B cell (primary cell): ENCODE measurements at regions of chr11 and their contacts with region 1.

Region 1: GRCh38 chr11:130002846-130003716 is 446 bp upstream of the PRDM10 start:
- DNase-seq: peak; percentile 99
- ATAC-seq: peak; percentile 76
- H3K4me3 ChIP-seq: peak overlapping the region; percentile 74 to 94 (median 83)
- H3K4me3 Mint-ChIP-seq: peak overlapping the region; percentile 100
- H3K27ac ChIP-seq: peak overlapping the region; percentile 100
- H3K27ac Mint-ChIP-seq: peak overlapping the region; percentile 100
- H3K4me1 ChIP-seq: peaks cover 21 to 27% of the 10 kb centered on the region in 2 donors
- H3K4me1 Mint-ChIP-seq: peaks cover 33% of the 10 kb centered on the region
- H3K27me3 ChIP-seq: peaks cover 0 to 6% (median 2%) of the 10 kb centered on the region in 4 experiments
- H3K27me3 Mint-ChIP-seq: peaks cover 19% of the 10 kb centered on the region
- CTCF ChIP-seq: no peak

Region 2: DNA sequence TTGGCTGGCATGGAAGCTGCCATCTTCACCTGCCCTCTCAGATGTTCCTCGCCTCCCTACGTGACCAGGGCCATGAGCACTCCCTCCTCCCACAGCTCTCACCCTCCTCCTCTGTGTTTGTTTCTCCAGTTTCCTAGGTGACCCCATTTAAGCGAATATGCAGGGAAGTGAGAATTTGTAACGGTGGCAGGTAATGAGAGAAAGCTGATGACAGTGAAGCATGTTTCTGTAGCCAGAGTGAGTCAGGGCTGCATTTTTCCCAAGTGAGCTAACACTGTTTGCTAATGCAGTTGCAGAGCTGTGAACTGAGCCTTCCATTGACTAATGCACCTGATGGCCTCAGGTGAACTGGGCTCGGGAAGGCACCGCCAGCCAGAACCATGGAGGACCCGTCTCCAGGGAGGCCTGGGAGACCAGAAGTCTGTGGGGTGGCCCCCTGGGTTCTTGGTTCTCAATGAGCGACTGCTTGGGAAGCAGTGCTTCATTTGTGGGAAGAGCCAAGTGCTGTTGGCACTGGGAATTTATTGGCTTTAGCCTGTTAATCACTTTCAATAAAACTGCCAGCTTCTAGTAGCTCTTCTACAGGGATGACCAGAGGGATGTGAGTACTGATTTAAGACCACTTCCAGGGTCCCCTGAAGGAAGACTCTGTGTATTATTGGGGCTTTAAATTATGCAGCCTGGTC is 562.9 kb before region 1 on chr11:
- CTCF ChIA-PET with region 1: no interaction called
- POLR2A ChIA-PET with region 1: interaction called, 10 read pairs
- intact Hi-C with region 1: no loop called
- DNase-seq: no peak
- ATAC-seq: no peak
- H3K4me3 ChIP-seq: no peak overlapping the region
- H3K4me3 Mint-ChIP-seq: no peak overlapping the region
- H3K27ac ChIP-seq: no peak overlapping the region
- H3K27ac Mint-ChIP-seq: no peak overlapping the region
- H3K4me1 ChIP-seq: no peaks in the 10 kb centered on the region
- H3K4me1 Mint-ChIP-seq: no peaks in the 10 kb centered on the region
- H3K27me3 ChIP-seq: no peaks in the 10 kb centered on the region
- H3K27me3 Mint-ChIP-seq: no peaks in the 10 kb centered on the region
- CTCF ChIP-seq: no peak

Region 3: DNA sequence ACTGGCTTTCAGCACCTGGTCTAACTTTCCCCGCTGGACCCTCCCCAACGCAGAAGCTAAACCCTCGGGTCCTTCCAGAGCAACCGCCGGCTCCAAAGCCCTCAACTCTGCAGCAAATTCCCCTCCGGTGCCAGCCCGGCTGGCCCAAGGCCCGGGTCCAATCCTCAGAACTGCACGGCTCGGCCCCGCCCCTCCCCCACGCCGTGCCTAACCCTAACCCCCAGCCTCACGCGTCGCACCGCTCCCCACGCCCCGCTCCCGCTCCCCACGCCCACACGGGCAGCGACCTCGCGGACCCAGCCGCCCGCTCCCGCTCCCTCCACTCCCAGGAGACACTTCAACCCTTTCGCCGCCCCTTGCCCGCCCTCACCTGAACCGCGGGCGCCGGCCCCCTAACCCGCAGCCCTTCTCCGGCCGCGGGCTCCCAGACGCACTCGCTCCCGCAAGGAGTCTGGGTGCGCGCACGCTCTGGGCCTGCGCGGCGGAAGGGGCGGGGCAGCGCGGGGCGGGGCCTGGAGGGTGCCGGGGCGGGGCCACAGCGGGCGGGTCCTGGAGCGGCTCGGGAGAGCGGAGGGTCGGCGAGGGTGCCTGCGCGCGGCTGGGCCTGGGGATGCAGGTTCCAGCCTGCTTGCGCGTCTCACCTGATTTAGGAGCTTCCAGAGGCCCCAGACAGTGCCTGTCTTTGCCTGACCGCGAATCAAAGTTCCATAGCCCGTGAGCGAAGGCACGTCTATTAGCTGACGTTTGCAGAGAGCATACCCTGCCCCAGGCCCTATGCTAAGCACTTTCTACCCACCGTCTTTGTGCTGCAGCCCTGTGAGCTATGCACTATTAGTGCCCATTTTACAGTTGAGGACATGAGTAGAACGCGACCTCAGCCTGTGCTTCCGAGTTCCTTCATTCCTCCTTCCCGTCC is 107.7 kb before region 1 on chr11 and contains the start of gene NFRKB:
- CTCF ChIA-PET with region 1: no interaction called
- POLR2A ChIA-PET with region 1: no interaction called
- intact Hi-C with region 1: loop called (anchors 1 kb)
- DNase-seq: peak; percentile 86
- ATAC-seq: peak; percentile 97
- H3K4me3 ChIP-seq: peak within 1 kb of the TSS; percentile 71 to 92 (median 79)
- H3K4me3 Mint-ChIP-seq: peak within 1 kb of the TSS; percentile 92
- H3K27ac ChIP-seq: peak within 1 kb of the TSS; percentile 35 to 53
- H3K27ac Mint-ChIP-seq: peak within 1 kb of the TSS; percentile 82
- H3K4me1 ChIP-seq: peaks cover 10 to 14% of the 10 kb centered on the region in 2 donors
- H3K4me1 Mint-ChIP-seq: peaks cover 22% of the 10 kb centered on the region
- H3K27me3 ChIP-seq: no peaks in the 10 kb centered on the region
- H3K27me3 Mint-ChIP-seq: no peaks in the 10 kb centered on the region
- CTCF ChIP-seq: no peak
- total RNA-seq, gene NFRKB: 36.9 and 40.4 TPM in 2 replicates

Region 4: GRCh38 chr11:129985823-129986222 is 17.3 kb before region 1 on chr11:
- CTCF ChIA-PET with region 1: no interaction called
- POLR2A ChIA-PET with region 1: no interaction called
- intact Hi-C with region 1: no loop called
- DNase-seq: no peak
- ATAC-seq: no peak
- H3K4me3 ChIP-seq: no peak overlapping the region
- H3K4me3 Mint-ChIP-seq: no peak overlapping the region
- H3K27ac ChIP-seq: no peak overlapping the region
- H3K27ac Mint-ChIP-seq: no peak overlapping the region
- H3K4me1 ChIP-seq: no peaks in the 10 kb centered on the region
- H3K4me1 Mint-ChIP-seq: no peaks in the 10 kb centered on the region
- H3K27me3 ChIP-seq: peaks cover 0 to 2% (median 0%) of the 10 kb centered on the region in 4 experiments
- H3K27me3 Mint-ChIP-seq: peaks cover 3% of the 10 kb centered on the region
- CTCF ChIP-seq: no peak

Region 5: GRCh38 chr11:130069684-130070108 is 66.6 kb after region 1 on chr11 and contains the start of gene APLP2:
- CTCF ChIA-PET with region 1: interaction called, 15 read pairs
- POLR2A ChIA-PET with region 1: interaction called, 23 read pairs
- intact Hi-C with region 1: loop called (anchors 1 kb)
- DNase-seq: peak; percentile 98
- ATAC-seq: peak; percentile 94
- H3K4me3 ChIP-seq: peak within 1 kb of the TSS; percentile 64 to 90 (median 81)
- H3K4me3 Mint-ChIP-seq: peak within 1 kb of the TSS; percentile 98
- H3K27ac ChIP-seq: peak within 1 kb of the TSS; percentile 58 to 73
- H3K27ac Mint-ChIP-seq: peak within 1 kb of the TSS; percentile 96
- H3K4me1 ChIP-seq: peaks cover 22 to 25% of the 10 kb centered on the region in 2 donors
- H3K4me1 Mint-ChIP-seq: peaks cover 36% of the 10 kb centered on the region
- H3K27me3 ChIP-seq: peaks cover 0 to 3% (median 0%) of the 10 kb centered on the region in 4 experiments
- H3K27me3 Mint-ChIP-seq: peaks cover 10% of the 10 kb centered on the region
- CTCF ChIP-seq: no peak
- total RNA-seq, gene APLP2: 102 and 111 TPM in 2 replicates

Region 6: DNA sequence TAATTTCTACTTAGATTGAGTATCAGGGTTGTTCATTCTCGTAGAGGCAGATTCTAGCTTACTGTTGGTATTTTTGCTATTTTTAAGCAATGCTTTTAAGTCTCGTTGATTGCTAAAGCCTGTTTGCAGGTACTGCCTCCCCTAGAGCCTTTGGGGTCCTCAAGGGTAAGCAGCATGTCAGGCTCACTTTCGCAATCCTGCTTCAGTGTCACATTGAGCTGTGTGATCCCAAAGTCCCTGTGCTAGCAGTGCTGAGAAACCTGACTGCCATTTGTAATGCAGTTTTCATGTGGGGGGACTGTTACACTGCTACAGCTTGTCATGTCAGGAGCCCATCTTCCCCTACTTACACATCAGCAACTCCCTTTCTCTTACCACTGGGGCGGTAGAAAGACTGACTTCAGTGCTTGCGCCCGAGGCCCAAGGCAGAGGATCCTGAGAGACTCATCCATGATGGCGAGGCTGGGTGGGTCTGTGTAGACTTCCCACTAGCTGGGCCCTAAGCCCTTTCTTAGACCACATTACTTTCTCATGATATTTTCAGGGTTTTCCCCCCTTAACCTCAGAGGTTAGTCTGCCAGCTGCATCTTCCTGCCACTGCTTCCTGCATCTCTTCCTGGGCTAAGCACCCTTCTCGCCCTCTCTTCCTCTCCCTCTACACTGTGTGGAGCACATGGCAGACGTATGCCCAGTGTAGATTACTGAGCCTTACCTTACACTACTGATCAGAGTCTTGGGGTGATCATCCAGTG is 115.7 kb after region 1 on chr11:
- CTCF ChIA-PET with region 1: interaction called, 6 read pairs
- POLR2A ChIA-PET with region 1: interaction called, 7 read pairs
- intact Hi-C with region 1: loop called (anchors 5 kb)
- DNase-seq: peak; percentile 76
- ATAC-seq: peak; percentile 72
- H3K4me3 ChIP-seq: peak overlapping the region in 4 of 5 experiments; percentile 1 to 53 (median 22)
- H3K4me3 Mint-ChIP-seq: peak overlapping the region; percentile 48
- H3K27ac ChIP-seq: peak overlapping the region; percentile 75 to 77
- H3K27ac Mint-ChIP-seq: peak overlapping the region; percentile 73
- H3K4me1 ChIP-seq: peaks cover 87 to 93% of the 10 kb centered on the region in 2 donors
- H3K4me1 Mint-ChIP-seq: peaks cover 89% of the 10 kb centered on the region
- H3K27me3 ChIP-seq: no peaks in the 10 kb centered on the region
- H3K27me3 Mint-ChIP-seq: no peaks in the 10 kb centered on the region
- CTCF ChIP-seq: no peak

Region 7: DNA sequence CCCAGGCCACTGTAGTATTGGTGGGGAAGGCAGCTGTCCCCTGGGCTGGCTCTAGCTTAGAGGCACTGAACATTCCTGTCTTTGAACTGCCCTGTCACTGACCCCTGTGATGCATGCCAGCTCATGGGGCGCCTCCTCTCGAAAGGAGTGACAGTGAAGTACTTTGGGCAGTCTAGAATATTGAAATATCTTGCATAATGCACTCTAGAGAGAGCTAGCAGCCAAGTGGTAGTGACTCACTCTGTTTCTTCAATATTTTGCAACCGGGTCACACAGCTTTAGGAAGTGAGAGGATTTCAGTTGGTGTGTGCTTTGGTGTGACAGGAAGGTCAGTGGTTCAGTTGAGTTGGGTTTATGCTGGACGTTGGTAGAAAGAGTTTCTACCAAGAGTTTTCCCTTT is 121.0 kb after region 1 on chr11:
- CTCF ChIA-PET with region 1: interaction called, 6 read pairs
- POLR2A ChIA-PET with region 1: interaction called, 10 read pairs
- intact Hi-C with region 1: loop called (anchors 5 kb)
- DNase-seq: no peak
- ATAC-seq: no peak
- H3K4me3 ChIP-seq: no peak overlapping the region
- H3K4me3 Mint-ChIP-seq: peak overlapping the region; percentile 34
- H3K27ac ChIP-seq: no peak overlapping the region
- H3K27ac Mint-ChIP-seq: no peak overlapping the region
- H3K4me1 ChIP-seq: peaks cover 49 to 50% of the 10 kb centered on the region in 2 donors
- H3K4me1 Mint-ChIP-seq: peaks cover 55% of the 10 kb centered on the region
- H3K27me3 ChIP-seq: no peaks in the 10 kb centered on the region
- H3K27me3 Mint-ChIP-seq: no peaks in the 10 kb centered on the region
- CTCF ChIP-seq: no peak

Region 8: DNA sequence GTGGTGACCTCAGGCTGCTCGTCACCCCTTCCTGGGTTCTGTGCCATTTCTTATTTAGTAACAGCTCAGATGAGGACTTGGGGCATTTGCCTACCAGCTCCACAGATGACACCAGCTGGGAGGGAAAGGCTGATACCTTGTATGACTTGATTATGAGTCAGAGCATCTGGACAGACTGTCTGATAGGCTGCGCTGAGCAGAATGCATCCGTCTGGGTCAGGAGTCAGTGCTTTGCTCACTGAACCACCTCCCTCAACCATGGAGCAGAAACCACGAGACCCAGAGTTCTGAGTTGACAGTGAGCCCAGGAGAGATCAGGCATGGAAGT is 163.3 kb after region 1 on chr11:
- CTCF ChIA-PET with region 1: no interaction called
- POLR2A ChIA-PET with region 1: interaction called, 5 read pairs
- intact Hi-C with region 1: loop called (anchors 2 kb)
- DNase-seq: peak; percentile 83
- ATAC-seq: peak; percentile 83
- H3K4me3 ChIP-seq: no peak overlapping the region
- H3K4me3 Mint-ChIP-seq: peak overlapping the region; percentile 82
- H3K27ac ChIP-seq: peak overlapping the region; percentile 54 to 77
- H3K27ac Mint-ChIP-seq: peak overlapping the region; percentile 95
- H3K4me1 ChIP-seq: peaks cover 41 to 73% of the 10 kb centered on the region in 2 donors
- H3K4me1 Mint-ChIP-seq: peaks cover 86% of the 10 kb centered on the region
- H3K27me3 ChIP-seq: no peaks in the 10 kb centered on the region
- H3K27me3 Mint-ChIP-seq: no peaks in the 10 kb centered on the region
- CTCF ChIP-seq: no peak